ENCODE measurements at regions of chr17 and their contacts with region 1.

Region 1: GRCh38 chr17:28865946-28866752 is 11.3 kb downstream of the ERAL1 start:
- DNase-seq: no peak
- H3K4me3 ChIP-seq: no peak overlapping the region
- CTCF ChIP-seq: no peak

Region 2: GRCh38 chr17:28818819-28819221 is 47.3 kb before region 1 on chr17:
- in situ Hi-C with region 1: loop called (anchors 5 kb)
- DNase-seq: no peak
- H3K4me3 ChIP-seq: no peak overlapping the region
- CTCF ChIP-seq: no peak

Region 3: DNA sequence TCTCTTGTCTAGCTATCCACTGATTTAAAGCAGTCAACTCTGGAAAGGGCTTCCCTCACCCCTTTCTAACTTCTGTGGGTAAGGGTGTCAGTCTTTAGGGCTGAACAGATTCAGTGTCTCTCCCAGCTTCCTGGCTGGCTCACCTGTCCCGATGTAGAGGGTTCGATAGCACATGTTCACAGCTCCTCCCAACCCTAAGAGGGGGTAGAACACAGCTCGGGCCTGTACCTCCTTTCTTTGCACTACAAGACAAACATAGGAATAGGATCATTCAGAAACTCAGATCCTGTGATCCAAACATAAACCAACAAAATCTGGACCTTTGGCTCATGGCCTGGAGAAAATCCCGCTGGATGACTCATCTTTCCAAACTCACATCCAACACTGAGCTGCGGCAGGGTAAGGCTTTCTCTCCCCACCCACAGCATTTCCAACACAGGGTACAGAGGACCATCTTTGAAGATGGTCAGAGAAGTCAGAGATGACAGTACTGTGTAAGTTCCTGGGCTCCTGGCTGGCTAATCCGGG is 42.6 kb after region 1 on chr17:
- in situ Hi-C with region 1: loop called (anchors 5 kb)
- DNase-seq: peak; percentile 67
- H3K4me3 ChIP-seq: no peak overlapping the region
- CTCF ChIP-seq: no peak

Region 4: DNA sequence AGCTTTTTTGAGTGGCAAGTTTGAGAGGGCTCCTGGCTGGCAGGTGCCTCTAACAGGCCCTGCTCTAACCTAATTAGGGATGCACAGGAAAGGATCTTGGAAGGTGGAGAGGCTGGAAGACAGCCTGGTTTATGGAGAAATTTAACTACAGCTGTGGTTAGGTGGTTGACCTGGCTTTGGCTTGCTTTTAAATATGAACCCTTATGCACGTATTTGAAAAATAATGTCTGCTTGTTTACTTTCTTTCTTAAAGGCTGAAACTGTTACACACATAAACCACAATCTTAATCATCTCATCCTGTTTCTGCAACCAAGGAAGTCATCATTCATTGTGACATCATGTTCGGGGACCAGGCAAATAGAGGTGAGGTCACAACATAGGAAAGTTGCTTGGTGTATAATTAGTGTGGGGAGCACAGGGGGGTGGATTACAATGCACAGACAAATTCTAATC is 59.8 kb after region 1 on chr17:
- in situ Hi-C with region 1: no loop called
- DNase-seq: peak; percentile 76
- H3K4me3 ChIP-seq: no peak overlapping the region
- CTCF ChIP-seq: no peak

Region 5: DNA sequence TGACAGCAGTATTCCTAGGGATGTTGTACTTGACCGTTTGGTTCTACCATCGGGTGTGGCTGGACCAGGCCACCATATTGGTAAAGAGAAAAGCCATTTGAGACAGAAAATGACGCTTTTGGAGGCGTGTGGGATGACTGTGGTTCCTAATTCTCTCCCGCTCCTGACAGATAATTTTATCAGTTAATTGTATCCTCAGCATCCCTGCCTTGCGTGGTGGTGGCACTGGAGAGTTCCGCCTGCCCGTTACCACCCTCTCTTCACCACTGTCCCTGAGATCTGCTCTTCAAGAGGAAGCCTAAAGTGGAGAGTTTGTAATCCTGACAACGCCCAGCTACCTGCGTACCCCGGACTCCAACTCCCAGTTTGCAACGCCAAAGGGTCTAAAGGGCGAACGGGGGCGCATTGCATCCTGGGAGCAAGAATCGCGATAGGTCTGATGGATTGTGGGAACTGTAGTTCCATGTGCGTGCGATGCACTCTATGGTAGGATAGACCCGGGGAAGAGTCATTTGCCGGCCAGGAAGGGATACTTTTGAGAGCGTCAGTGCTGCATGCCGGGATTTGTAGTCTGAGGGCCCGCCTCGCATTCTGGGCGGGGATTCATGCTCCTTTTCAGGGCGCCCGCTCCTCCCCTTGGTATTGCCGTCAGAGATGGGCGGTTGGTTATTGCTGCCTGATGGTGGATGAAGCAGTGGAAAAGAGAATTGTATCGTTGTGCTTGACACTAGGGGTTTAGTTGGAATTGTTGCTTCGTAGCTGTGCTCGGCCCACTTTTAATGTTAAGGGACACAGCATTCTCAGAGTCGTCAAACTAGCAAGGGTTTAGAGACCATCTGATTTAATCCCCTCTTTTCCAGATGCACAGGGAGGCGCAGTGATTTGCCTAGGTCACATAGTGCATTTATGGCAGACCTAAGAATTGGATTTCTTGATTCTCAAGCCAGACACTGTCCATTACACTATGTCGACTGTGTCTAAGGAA is 86.1 kb after region 1 on chr17:
- in situ Hi-C with region 1: no loop called
- DNase-seq: peak; percentile 99
- H3K4me3 ChIP-seq: peak overlapping the region; percentile 63
- CTCF ChIP-seq: no peak

Region 6: DNA sequence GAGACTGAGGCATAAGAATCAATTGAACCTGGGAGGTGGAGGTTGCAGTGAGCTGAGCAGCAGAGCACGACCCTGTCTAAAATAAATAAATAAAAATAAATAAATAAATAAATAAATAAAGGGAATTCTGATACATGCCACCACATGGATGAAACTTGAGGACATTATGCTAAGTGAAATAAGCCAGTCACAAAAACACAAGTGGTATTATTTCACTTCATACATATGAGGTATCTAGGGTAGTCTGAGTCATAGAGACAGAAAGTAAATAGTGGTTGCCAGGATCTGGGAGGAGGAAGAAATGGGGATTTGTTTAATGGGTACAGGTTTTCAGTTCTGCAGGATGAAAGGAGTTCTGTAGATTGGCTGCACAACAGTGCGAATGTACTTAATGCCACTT is 193.1 kb after region 1 on chr17:
- in situ Hi-C with region 1: no loop called
- DNase-seq: no peak
- H3K4me3 ChIP-seq: no peak overlapping the region
- CTCF ChIP-seq: no peak

Measured in astrocyte of the cerebellum (primary cell).